Posterior vena cava (tissue), 2 donors: ENCODE measurements at regions of chr1 and their contacts with region 1.

Region 1: GRCh38 chr1:928825-929661 is 5.3 kb downstream of the SAMD11 start:
- DNase-seq: no peak

Region 2: GRCh38 chr1:912740-913301 is 16.2 kb before region 1 on chr1:
- intact Hi-C with region 1: no loop called
- DNase-seq: peak; percentile 75

Region 3: DNA sequence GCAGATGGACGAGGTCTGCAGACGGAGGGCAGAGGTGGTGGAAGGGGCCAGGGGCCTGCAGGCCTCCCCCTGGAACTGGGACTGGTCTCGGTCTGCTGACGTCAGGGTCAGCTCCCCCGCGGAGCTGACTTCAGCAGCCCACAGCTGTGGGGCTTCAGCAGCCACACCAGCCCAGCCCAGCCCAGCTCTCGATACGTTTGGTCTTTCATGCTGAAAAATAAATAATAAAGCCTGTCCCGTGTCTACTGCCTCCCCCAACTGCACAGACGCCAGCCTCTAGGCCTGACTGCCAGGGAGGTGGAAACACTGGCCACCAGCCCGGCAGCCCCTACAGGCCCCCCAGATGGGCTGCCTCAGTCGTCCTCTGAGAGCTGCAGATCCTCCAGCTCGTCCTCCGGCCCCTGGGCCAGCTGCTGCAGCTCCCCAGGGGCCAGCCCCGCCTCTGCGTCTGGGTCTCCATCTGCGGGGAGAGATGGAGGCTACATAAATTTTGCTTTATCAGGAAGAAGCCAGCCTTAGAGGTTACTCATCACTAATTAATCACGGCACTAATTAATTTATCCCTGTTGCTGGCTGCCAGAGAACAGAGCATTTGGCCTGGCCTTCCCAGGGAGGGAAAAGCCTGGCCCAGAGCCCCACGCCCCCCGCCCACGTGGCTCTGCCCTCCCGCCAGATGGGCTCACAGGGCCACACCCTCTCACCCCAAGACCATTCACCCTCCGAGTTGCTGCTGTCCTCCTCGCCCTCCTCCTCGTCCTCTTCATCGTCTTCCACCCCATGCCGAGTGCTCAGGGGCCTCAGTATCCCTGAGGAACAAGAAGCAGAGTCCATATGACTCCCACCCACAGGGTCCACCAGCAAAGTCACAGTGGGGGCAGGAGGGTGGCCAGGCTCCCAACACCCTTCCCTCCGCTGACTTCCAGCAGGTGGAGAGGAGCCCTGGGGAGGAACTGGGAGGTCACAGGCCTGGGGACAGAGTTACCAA is 15.6 kb after region 1 on chr1:
- intact Hi-C with region 1: loop called in 1 of 2 experiments (anchors 2 kb)
- DNase-seq: no peak